Motor neuron (in vitro differentiated cells): ENCODE measurements at regions of chr16 and their contacts with region 1.

Region 1: GRCh38 chr16:58000706-58001676 is at the start of gene USB1:
- ATAC-seq: peak; percentile 78 to 87 (median 82)
- H3K4me3 ChIP-seq: peak within 1 kb of the TSS; percentile 55 to 99 (median 72)
- H3K27ac ChIP-seq: peak within 1 kb of the TSS; percentile 73 to 87
- H3K4me1 ChIP-seq: peaks cover 5 to 7% of the 10 kb centered on the region in 2 donors
- total RNA-seq, gene USB1: 10.9 to 40.0 (median 16.2) TPM

Region 2: DNA sequence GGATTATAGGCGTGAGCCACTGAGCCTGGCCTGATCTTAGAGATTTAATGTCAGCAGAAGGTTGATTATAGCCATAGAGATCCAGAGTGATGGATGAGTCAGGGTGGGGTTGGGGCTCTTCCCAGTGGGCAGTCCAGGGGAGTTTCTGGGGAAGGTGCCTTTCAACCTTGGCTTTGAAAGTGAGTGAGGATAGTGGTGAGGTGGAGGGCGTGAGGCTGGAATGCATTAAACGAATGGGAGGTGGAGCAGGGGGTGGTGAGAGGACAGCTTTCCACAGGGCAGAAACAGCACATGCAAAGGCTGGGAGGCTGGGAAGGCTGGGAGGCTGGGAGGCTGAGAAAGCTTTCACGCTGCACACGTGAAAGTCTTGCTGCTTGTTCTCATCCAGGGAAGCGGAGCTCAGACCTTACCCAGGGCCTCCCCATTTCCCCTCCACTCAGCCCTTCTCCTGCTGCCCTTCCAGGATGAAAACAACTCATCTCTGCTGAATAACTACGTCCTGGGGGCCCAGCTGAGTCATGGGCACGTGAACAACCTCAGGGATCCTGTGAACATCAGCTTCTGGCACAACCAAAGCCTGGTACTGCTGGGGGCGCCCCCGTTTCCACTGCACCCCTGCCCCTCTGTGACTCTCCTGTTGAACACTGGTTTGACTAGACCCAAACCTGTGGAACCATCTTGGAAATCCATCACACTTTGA is 436.3 kb before region 1 on chr16:
- in situ Hi-C with region 1: loop called in 2 of 9 experiments (anchors 25 kb)
- ATAC-seq: peak in 7 of 8 experiments; percentile 41 to 86 (median 85)
- H3K4me3 ChIP-seq: no peak overlapping the region
- H3K27ac ChIP-seq: peak overlapping the region in 1 of 2 donors; percentile 38
- H3K4me1 ChIP-seq: peaks cover 4 to 9% of the 10 kb centered on the region in 2 donors

Region 3: GRCh38 chr16:57591086-57591869 is 409.7 kb before region 1 on chr16:
- in situ Hi-C with region 1: loop called in 2 of 9 experiments (anchors 25 kb)
- ATAC-seq: peak; percentile 88 to 99 (median 94)
- H3K4me3 ChIP-seq: no peak overlapping the region
- H3K27ac ChIP-seq: no peak overlapping the region
- H3K4me1 ChIP-seq: peaks cover 0 to 2% of the 10 kb centered on the region in 2 donors

Region 4: DNA sequence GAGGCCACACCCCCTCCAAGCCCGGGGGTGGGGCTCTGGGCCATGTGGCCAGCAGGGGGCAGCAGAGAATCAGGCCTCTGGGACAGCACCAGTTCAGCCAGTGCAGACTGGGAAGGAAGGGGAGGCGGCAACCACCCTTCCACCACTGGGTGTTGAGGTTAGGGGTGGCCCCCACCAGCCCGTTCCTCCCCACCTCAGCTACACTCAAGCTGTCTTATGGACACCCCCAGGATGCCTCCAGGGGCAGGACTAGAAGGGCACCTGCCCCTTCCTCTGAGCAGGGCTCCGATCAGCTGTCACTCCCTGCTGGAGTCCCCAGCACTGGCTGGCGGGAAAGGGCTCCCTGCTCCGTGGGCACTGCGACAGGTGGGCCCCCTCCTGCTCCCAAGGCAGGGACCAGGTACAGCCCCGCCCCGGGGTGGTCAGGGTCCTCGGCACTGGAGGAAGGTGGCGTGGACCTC is 243.6 kb before region 1 on chr16:
- in situ Hi-C with region 1: loop called in 2 of 9 experiments (anchors 25 kb)
- ATAC-seq: peak; percentile 66 to 98 (median 78)
- H3K4me3 ChIP-seq: no peak overlapping the region
- H3K27ac ChIP-seq: no peak overlapping the region
- H3K4me1 ChIP-seq: no peaks in the 10 kb centered on the region

Region 5: GRCh38 chr16:57795431-57795878 is 205.5 kb before region 1 on chr16:
- in situ Hi-C with region 1: loop called in 3 of 9 experiments (anchors 25 kb)
- ATAC-seq: peak in 5 of 8 experiments; percentile 18 to 77 (median 48)
- H3K4me3 ChIP-seq: no peak overlapping the region
- H3K27ac ChIP-seq: no peak overlapping the region
- H3K4me1 ChIP-seq: peaks cover 0 to 22% of the 10 kb centered on the region in 2 donors

Region 6: GRCh38 chr16:57899771-57900661 is 101.0 kb before region 1 on chr16:
- in situ Hi-C with region 1: loop called in 6 of 9 experiments (anchors 5 to 25 kb)
- ATAC-seq: peak; percentile 61 to 91 (median 78)
- H3K4me3 ChIP-seq: no peak overlapping the region
- H3K27ac ChIP-seq: no peak overlapping the region
- H3K4me1 ChIP-seq: no peaks in the 10 kb centered on the region

Region 7: DNA sequence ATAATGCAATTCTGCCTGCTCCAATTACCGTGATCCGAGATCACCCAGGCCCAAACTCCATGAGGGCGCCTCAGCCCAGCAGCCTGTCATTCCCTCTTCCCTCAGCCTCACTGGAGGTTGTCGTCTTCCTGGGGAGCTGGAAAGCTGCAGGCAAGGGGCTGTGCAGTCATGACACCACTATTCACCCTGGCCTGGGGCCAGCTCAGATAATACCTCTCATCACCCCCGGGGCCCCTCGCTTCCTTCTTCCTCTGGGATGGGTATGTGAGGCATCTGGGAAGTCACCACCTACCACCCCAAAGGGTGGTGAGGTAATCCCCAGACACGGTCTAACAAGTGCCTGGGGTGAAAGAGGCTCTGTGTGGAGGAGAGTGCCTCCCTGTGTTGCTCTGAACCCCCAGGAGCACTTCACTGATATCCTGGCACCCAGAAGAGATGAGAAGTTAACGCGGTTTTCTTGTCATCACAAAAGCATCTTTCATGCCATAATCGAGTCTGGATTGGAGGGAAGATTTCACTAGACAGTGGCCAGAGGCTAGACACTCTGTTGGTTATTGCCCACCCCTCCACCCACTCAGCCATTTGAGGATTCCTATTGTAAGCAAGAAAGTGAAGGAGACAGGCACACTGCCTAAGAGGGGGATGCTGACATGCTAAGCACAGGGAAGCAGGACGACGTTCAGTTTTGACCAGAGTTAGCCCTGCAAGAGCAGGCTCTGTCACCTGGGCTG is 109.7 kb after region 1 on chr16:
- in situ Hi-C with region 1: loop called in 1 of 9 experiments (anchors 25 kb)
- ATAC-seq: peak in 6 of 8 experiments; percentile 16 to 83 (median 78)
- H3K4me3 ChIP-seq: no peak overlapping the region
- H3K27ac ChIP-seq: no peak overlapping the region
- H3K4me1 ChIP-seq: peaks cover 14 to 16% of the 10 kb centered on the region in 2 donors